ENCODE measurements at regions of chr1 and their contacts with region 1.

Region 1: DNA sequence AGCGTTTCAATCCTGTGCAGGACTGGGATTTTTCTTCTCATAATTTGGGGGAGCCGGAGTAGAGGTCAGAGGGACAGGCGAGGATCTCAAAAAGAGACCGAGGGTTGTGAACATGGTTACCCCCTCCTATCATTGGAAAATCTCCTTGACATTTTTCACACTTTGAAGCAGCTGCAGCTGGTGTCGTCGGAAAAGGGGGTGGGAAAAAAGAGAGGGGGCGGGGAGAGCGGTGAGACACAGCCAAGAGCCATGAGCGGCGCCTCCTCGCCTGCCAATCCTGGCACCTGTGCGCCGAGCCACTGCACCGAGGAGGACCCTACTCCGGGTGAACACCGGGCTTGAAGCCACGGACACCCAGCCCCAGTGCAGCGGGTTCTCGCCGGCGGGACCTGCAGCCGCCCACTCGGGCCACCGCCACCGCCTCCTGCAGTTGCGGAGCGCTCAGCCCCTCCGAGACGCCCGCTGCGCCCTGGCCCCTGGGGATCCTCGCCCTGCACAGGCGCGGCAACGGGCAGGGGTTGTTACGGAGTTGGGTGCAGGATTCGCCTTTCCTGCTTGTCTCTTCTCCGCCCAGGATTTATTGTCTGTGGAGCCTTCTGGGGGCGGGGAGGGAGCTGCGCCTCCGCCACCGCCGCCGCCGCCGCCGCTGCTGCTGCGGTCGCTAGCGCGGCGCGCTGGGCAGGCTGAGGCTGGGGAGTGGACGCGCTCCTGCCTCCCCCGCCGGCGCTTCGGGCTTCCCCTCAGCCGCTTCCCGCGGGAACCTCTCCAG is at the start of gene LRRC7:
- DNase-seq: no peak
- H3K27ac ChIP-seq: no peak within 1 kb of the TSS
- CTCF ChIP-seq: no peak

Region 2: GRCh38 chr1:68470388-68470970 is 1097.4 kb before region 1 on chr1:
- CTCF ChIA-PET with region 1: interaction called, 13 read pairs
- POLR2A ChIA-PET with region 1: no interaction called
- DNase-seq: no peak
- H3K27ac ChIP-seq: no peak overlapping the region
- CTCF ChIP-seq: peak; percentile 81